ENCODE measurements at regions of chr17 and their contacts with region 1.

Region 1: GRCh38 chr17:81238817-81239600 is at the starts of genes NDUFAF8 and TEPSIN:
- H3K4me3 ChIP-seq: peak within 1 kb of the TSS; percentile 86
- H3K27ac ChIP-seq: peak within 1 kb of the TSS; percentile 92
- H3K4me1 ChIP-seq: peaks cover 8% of the 10 kb centered on the region
- CTCF ChIP-seq: no peak

Region 2: GRCh38 chr17:81222906-81223761 is 15.9 kb before region 1 on chr17 and contains the start of gene CEP131:
- CTCF ChIA-PET with region 1: no interaction called
- POLR2A ChIA-PET with region 1: interaction called, 55 read pairs
- H3K4me3 ChIP-seq: peak within 1 kb of the TSS; percentile 86
- H3K27ac ChIP-seq: peak within 1 kb of the TSS; percentile 78; the same call in 1 of the 2 replicates
- H3K4me1 ChIP-seq: peaks cover 13% of the 10 kb centered on the region
- CTCF ChIP-seq: peak; percentile 37; the same call in 1 of the 2 replicates

Region 3: GRCh38 chr17:81460856-81461460 is 221.9 kb after region 1 on chr17:
- CTCF ChIA-PET with region 1: no interaction called
- POLR2A ChIA-PET with region 1: no interaction called
- H3K4me3 ChIP-seq: no peak overlapping the region
- H3K27ac ChIP-seq: no peak overlapping the region
- H3K4me1 ChIP-seq: no peaks in the 10 kb centered on the region
- CTCF ChIP-seq: no peak